ENCODE measurements at regions of chr1 and their contacts with region 1.

Region 1: DNA sequence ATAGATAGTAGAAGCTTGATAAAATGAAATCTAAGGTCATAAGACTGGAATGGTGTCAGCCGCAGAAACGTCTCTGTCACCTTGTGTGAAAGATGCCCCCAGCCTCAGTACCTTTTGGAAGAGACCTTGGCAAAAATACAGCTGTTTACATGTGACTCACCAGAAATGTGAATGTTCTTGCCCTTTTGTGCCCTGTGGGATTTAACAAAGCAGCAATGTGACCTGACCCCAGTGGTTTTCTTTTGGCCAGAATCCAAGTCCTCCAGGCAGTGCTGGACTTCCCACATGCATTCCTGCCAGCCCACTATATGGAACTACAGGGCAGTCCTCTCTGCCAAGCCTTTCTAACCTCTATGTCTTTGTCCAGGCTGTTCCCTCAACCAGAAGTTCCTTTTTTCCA is 27.2 kb upstream of the LRRC8C start:
- DNase-seq: no peak
- H3K4me3 Mint-ChIP-seq: peak overlapping the region; percentile 43
- H3K27ac Mint-ChIP-seq: peak overlapping the region; percentile 100
- H3K4me1 Mint-ChIP-seq: peaks cover 98% of the 10 kb centered on the region
- H3K27me3 Mint-ChIP-seq: no peaks in the 10 kb centered on the region

Region 2: GRCh38 chr1:89198491-89199072 is 407.1 kb before region 1 on chr1 and contains the start of gene GBP4:
- CTCF ChIA-PET with region 1: no interaction called
- POLR2A ChIA-PET with region 1: no interaction called
- intact Hi-C with region 1: loop called (anchors 5 kb)
- DNase-seq: peak; percentile 60
- H3K4me3 Mint-ChIP-seq: peak within 1 kb of the TSS; percentile 88
- H3K27ac Mint-ChIP-seq: peak within 1 kb of the TSS; percentile 90
- H3K4me1 Mint-ChIP-seq: peaks cover 80% of the 10 kb centered on the region
- H3K27me3 Mint-ChIP-seq: no peaks in the 10 kb centered on the region
- total RNA-seq, gene GBP4: 26.5 to 29.9 TPM

Region 3: GRCh38 chr1:89298461-89298860 is 307.2 kb before region 1 on chr1:
- CTCF ChIA-PET with region 1: no interaction called
- POLR2A ChIA-PET with region 1: no interaction called
- intact Hi-C with region 1: no loop called
- DNase-seq: no peak
- H3K4me3 Mint-ChIP-seq: no peak overlapping the region
- H3K27ac Mint-ChIP-seq: no peak overlapping the region
- H3K4me1 Mint-ChIP-seq: peaks cover 63% of the 10 kb centered on the region
- H3K27me3 Mint-ChIP-seq: no peaks in the 10 kb centered on the region

Region 4: GRCh38 chr1:89538361-89538760 is 67.3 kb before region 1 on chr1:
- CTCF ChIA-PET with region 1: interaction called, 4 read pairs
- POLR2A ChIA-PET with region 1: interaction called, 22 read pairs
- intact Hi-C with region 1: no loop called
- DNase-seq: peak; percentile 31
- H3K4me3 Mint-ChIP-seq: no peak overlapping the region
- H3K27ac Mint-ChIP-seq: peak overlapping the region; percentile 92
- H3K4me1 Mint-ChIP-seq: peaks cover 83% of the 10 kb centered on the region
- H3K27me3 Mint-ChIP-seq: no peaks in the 10 kb centered on the region

Region 5: GRCh38 chr1:89622895-89623294 is 17.2 kb after region 1 on chr1:
- CTCF ChIA-PET with region 1: interaction called, 18 read pairs
- POLR2A ChIA-PET with region 1: interaction called, 225 read pairs
- intact Hi-C with region 1: no loop called
- DNase-seq: no peak
- H3K4me3 Mint-ChIP-seq: no peak overlapping the region
- H3K27ac Mint-ChIP-seq: no peak overlapping the region
- H3K4me1 Mint-ChIP-seq: peaks cover 68% of the 10 kb centered on the region
- H3K27me3 Mint-ChIP-seq: no peaks in the 10 kb centered on the region

Region 6: DNA sequence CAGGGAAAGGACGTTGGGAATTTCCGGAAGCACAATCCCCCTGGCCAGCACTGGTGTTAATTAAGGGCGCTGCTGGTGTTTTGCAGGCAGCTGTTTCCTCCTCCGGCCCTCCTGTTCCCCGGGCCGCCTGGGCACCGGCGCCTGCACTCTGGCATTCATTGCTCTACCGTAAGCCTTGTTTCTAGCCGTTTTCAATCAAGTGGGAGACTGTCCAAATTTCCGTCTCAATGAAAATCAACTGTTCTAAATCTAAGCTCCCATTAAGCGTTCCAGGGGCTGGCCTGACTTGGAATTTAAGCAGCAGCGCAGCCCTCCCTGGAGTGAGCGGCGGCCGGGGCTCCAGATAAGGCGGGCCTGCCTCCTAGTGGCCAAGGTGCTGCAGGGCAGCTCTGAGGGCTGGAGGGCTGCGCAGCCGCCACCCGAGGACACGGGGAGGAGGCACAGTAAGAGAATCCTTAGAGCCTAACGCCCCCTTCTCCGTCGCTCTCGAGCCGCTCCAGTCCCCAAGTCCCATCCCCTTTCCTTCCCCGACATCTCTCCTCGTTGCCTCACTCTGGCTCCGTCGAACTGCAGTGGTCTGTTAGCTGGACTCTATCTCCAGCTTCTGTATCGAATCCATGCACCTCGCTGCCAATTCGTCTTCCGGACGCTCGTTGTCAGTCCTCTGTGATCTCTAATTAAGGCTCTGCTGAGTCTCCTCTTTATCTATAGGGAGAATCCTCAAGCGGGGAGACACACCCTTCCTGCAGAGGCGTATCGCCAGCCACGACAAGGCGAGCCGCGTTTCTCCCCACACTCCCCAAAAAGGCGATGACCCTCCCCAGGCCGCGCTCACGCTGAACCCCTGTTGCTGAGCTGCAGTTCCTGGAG is 157.3 kb after region 1 on chr1:
- CTCF ChIA-PET with region 1: interaction called, 30 read pairs
- POLR2A ChIA-PET with region 1: interaction called, 4 read pairs
- intact Hi-C with region 1: loop called (anchors 1 kb)
- DNase-seq: peak; percentile 91
- H3K4me3 Mint-ChIP-seq: peak overlapping the region; percentile 72
- H3K27ac Mint-ChIP-seq: peak overlapping the region; percentile 80
- H3K4me1 Mint-ChIP-seq: peaks cover 46% of the 10 kb centered on the region
- H3K27me3 Mint-ChIP-seq: no peaks in the 10 kb centered on the region

Measured in activated CD4-positive, alpha-beta memory T cell treated with anti-CD3 and anti-CD28 coated beads for 36 hours (primary cell).